ENCODE measurements at regions of chr2 and their contacts with region 1.

Region 1: DNA sequence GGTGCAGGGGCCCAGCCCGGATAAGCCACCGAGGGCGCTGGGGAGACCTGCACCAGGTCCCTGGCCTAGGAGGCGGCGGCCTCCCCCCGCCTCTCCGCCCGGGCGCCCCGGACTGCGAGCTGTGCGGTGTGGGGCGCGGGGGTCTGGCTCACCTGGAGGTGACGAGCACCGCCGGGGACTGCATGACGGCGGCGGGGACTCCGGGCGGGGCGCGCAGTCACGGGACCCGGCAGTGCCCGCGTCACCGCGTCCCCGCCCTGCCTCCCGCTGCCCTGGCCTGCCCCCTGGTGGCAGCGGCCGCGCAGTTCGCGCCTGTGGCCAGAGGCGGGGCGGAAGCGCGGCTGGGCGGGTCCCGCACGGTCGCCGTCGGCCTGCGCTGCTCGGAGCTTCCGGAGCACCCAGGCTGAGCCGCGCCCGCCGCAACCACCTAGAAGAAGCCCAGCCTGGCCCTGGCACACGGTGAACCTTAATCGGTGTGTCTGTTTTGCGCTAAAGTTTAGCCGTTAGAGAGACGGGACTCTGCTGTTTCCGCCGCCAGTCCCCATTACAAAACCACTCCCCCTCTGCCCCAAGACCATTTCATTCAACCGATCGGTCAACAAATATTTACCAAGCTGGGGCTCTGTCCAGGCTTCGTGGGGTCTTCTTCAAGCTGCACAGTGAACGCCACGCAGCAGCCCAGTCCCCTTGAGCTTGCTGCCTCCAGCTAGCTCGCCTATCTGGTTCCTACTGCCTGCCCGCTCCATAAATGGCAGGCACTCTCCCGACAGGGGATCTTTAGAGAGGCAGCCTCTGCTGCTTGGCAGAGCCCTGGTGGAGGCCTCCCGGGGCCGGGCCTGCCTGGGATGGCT is at the start of gene HS1BP3:
- DNase-seq: no peak
- H3K4me3 ChIP-seq: peak within 1 kb of the TSS; percentile 91
- CTCF ChIP-seq: peak; percentile 81

Region 2: DNA sequence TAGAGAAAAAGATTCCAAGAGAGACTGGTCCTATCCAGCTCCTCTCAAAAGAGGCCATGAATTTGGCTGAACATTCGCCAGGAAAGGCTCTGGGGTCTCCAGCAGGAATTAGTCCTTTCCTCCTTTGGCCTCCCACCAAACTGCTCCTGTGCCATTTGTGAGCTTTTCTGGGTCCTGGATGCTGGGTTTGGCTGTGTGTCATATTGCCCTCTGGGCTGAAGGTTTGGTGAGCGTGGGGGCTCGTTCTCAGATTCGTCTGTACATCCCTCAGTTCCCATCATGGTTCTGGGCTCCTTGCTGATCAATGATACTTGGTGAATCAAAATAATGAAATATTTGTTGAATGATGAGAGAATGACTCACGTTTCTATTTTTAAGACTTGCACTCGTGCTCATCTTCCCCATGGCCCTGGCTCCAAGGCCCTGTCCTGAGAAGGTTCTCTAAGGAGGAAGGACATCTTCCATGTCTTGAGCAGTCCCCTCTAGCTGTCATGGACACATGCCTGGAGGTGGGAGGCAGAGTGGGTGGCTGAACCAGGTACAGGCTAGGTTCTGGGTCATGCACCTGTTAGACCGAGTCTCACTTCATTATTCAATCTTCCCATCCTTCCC is 252.0 kb before region 1 on chr2:
- CTCF ChIA-PET with region 1: interaction called, 16 read pairs
- POLR2A ChIA-PET with region 1: no interaction called
- DNase-seq: no peak
- H3K4me3 ChIP-seq: no peak overlapping the region
- CTCF ChIP-seq: no peak

Region 3: DNA sequence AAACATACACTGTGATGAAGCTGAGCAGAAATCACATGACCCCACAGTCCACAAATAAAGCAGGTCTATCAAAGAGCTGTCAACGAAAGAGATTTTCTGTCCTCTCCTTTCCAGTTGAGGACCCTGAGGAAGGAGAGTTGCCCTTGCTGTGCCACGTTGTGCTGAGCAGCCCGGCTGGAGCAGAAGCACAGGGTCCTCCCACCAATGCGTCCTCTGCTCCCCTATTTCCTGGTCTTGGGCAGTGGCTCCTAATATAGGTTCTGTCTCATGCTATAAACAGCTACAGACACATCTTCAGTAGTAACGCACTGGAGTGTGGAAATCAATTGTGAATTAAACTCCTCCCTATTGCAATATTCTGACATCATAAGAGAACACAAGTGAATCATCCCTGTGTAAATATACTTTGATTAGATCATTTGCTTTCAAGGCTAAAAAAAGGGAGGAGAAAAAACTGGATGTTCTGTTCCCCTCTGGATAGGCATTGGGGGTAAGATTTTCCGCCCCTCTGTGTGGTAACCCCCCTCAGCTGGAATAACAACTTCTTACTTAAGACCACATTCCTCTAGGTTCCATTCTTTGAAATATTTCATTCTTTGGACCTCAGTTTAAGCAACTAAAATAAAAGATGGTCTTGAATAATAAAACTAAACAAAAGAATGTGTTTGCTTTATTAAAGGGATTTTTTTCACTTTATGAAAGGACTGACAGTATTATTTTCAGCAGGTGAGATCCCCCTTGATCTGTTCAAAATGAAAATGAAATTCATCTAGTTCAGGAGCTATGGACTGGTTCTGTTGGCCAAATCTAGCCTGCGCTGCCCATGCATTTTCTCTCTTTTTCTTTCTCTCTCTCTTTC is 212.5 kb before region 1 on chr2:
- CTCF ChIA-PET with region 1: interaction called, 88 read pairs
- POLR2A ChIA-PET with region 1: no interaction called
- DNase-seq: peak; percentile 46
- H3K4me3 ChIP-seq: no peak overlapping the region
- CTCF ChIP-seq: no peak

Region 4: GRCh38 chr2:20625491-20626391 is 25.4 kb before region 1 on chr2:
- CTCF ChIA-PET with region 1: interaction called, 12 read pairs
- POLR2A ChIA-PET with region 1: no interaction called
- DNase-seq: no peak
- H3K4me3 ChIP-seq: no peak overlapping the region
- CTCF ChIP-seq: no peak

Region 5: DNA sequence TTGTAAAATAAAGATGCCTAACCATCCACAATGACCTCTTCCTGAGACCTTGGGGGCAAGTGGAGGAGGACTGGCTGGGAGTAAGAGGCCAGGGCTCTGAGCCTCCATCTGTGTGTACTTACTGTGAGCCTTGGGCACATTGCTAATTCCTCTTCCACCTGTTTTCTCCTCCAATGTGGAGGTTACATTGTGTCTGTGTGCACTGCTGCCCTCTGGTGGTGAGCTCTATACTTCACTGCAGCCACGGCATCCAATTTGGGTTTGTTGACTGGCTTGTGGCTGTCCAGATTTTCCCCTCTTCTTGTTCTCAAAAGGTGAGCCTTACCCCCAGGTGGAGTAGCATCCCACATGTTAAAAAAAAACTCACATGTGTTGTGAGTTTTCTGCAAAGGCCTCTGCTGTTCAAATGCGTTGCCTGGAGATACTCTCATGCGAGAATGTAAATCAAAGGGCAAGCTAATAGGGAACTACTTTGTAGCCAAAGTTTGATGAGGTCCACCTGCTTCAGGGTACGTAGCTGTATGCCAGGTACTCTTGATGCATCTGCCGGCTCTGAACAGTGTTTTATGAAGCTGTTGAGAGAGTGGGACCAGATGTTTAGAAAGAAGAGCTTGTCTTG is 311.9 kb after region 1 on chr2:
- CTCF ChIA-PET with region 1: interaction called, 19 read pairs
- POLR2A ChIA-PET with region 1: no interaction called
- DNase-seq: no peak
- H3K4me3 ChIP-seq: no peak overlapping the region
- CTCF ChIP-seq: peak; percentile 89